ENCODE measurements at regions of chr2 and their contacts with region 1.

Region 1: GRCh38 chr2:174771631-174772471 is 7.6 kb upstream of the CHRNA1 start:
- DNase-seq: peak; percentile 85 to 93
- H3K4me3 ChIP-seq: no peak overlapping the region; a peak in 2 of 8 replicates
- H3K27ac ChIP-seq: peak overlapping the region; percentile 80
- H3K4me1 ChIP-seq: peaks cover 11 to 19% (median 12%) of the 10 kb centered on the region in 4 experiments
- H3K27me3 ChIP-seq: no peaks in the 10 kb centered on the region
- CTCF ChIP-seq: peak; percentile 79 to 94 (median 86)
- EP300 ChIP-seq: peak in 1 of 2 experiments; percentile 66; a peak in 1 of 3 replicates
- POLR2A ChIP-seq: peak in 1 of 2 experiments; percentile 52; a peak in 2 of 3 replicates
- RAD21 ChIP-seq: peak; percentile 91 to 95

Region 2: GRCh38 chr2:174644401-174644800 is 127.5 kb before region 1 on chr2:
- CTCF ChIA-PET with region 1: no interaction called
- POLR2A ChIA-PET with region 1: no interaction called
- DNase-seq: no peak
- H3K4me3 ChIP-seq: no peak overlapping the region
- H3K27ac ChIP-seq: no peak overlapping the region
- H3K4me1 ChIP-seq: no peaks in the 10 kb centered on the region
- H3K27me3 ChIP-seq: no peaks in the 10 kb centered on the region
- CTCF ChIP-seq: no peak
- EP300 ChIP-seq: no peak
- POLR2A ChIP-seq: no peak
- RAD21 ChIP-seq: no peak

Region 3: DNA sequence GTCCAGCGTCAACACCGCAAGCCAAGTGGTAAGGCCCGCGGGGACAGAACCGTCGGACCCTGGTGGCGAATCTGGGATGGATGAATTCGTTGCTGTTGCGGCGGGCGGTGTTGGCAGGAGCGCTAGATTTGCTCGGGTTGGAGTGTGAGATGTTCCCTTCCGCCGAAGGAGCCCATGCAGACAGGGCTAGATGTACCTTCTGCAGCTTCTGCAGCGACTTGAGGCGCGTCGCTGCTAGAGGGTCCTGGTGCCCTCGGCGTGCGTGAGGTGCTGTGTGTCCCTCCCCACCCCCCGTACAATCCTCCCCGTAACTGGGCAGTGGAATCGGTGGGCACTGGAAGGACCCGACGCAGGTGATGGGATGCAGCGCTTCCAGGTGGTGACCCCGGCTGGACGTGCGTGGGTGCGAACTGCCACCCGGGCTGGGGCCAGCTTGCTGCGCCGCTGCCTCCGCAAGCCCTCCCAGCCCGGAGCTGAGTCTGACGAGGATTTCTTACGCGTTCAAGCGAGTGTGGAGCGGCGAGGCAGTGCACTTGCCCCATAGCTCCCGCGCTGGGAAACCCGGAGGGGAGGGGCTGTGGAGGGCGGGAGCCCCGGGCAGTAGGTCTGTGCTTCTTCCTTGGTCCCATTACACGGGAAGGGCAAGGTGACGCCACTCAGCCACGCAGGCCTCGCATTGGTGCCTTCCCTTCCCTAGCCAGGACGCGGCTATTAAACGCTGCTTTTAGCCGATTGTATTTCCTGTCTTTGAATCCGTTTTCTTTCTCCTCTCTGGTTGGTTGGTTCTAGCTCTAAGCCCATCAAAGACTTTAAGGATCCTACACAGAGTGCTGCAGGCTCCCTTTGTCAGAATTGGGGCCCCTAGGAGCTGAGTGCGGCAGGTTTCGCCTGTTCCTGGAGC is 41.8 kb before region 1 on chr2:
- CTCF ChIA-PET with region 1: interaction called, 15 read pairs
- POLR2A ChIA-PET with region 1: interaction called, 4 read pairs
- DNase-seq: peak; percentile 29 to 59
- H3K4me3 ChIP-seq: peak overlapping the region; percentile 40 to 66 (median 50)
- H3K27ac ChIP-seq: no peak overlapping the region
- H3K4me1 ChIP-seq: peaks cover 0 to 1% (median 0%) of the 10 kb centered on the region in 4 experiments; a peak in 3 of 7 replicates
- H3K27me3 ChIP-seq: peaks cover 0 to 20% (median 9%) of the 10 kb centered on the region in 4 experiments; a peak in 5 of 7 replicates
- CTCF ChIP-seq: 0 out of 4 replicates have a peak, but pooled peaks of 1 of the 3 experiments have one; percentile 11
- EP300 ChIP-seq: no peak
- POLR2A ChIP-seq: no peak
- RAD21 ChIP-seq: no peak

Region 4: GRCh38 chr2:174787487-174788205 is 15.8 kb after region 1 on chr2:
- CTCF ChIA-PET with region 1: interaction called, 82 read pairs
- POLR2A ChIA-PET with region 1: interaction called, 50 read pairs
- DNase-seq: peak; percentile 70 to 91
- H3K4me3 ChIP-seq: peak overlapping the region in 1 of 4 experiments; percentile 18; a peak in 1 of 8 replicates
- H3K27ac ChIP-seq: peak overlapping the region; percentile 83
- H3K4me1 ChIP-seq: peaks cover 6 to 34% (median 12%) of the 10 kb centered on the region in 4 experiments
- H3K27me3 ChIP-seq: no peaks in the 10 kb centered on the region
- CTCF ChIP-seq: no peak
- EP300 ChIP-seq: no peak
- POLR2A ChIP-seq: 0 out of 3 replicates have a peak, but pooled peaks of 1 of the 2 experiments have one; percentile 17
- RAD21 ChIP-seq: no peak

Region 5: DNA sequence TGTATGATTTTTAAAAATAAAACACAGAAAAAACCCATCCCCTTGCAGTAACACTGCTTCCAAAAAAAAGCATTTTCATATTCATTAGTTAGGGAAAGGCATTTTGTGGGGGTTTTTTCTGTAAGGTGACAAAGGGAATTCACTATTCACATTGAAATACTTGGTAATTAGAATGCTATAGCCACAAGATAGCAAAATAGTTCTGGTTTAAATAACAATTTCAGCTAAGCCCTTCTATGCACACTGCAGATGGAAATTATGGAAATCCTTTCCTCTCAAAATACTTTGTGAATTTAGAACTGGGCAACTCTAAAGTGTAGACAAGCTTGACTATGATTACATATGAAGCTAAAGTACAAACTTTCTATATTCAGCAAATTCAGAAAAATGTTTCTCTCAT is 94.6 kb after region 1 on chr2:
- CTCF ChIA-PET with region 1: interaction called, 11 read pairs
- POLR2A ChIA-PET with region 1: interaction called, 4 read pairs
- DNase-seq: no peak
- H3K4me3 ChIP-seq: peak overlapping the region in 1 of 4 experiments; percentile 41; a peak in 1 of 8 replicates
- H3K27ac ChIP-seq: no peak overlapping the region
- H3K4me1 ChIP-seq: peaks cover 0 to 4% (median 3%) of the 10 kb centered on the region in 4 experiments; a peak in 2 of 7 replicates
- H3K27me3 ChIP-seq: no peaks in the 10 kb centered on the region
- CTCF ChIP-seq: no peak
- EP300 ChIP-seq: no peak
- POLR2A ChIP-seq: no peak
- RAD21 ChIP-seq: no peak

Region 6: DNA sequence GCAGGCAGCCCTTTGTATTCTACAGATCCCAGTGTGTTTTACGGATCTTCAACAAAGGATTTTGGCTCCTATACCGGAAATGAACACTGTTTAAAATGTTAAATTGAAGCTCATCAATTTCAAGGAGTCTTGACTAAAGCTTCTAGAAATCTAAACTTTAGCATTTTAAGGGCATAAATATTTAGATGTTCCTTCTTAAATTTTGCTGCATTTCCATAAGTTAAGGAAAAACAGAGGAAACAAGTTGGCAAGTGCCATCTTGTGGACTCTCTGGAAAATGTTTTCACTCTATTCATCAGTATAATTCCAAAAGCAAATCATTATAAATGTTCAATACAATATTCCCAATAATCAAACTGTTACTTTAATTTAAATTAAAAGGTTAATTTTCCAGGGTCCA is 213.8 kb after region 1 on chr2:
- CTCF ChIA-PET with region 1: interaction called, 249 read pairs
- POLR2A ChIA-PET with region 1: interaction called, 8 read pairs
- DNase-seq: no peak
- H3K4me3 ChIP-seq: no peak overlapping the region
- H3K27ac ChIP-seq: no peak overlapping the region
- H3K4me1 ChIP-seq: no peaks in the 10 kb centered on the region; a peak in 2 of 7 replicates
- H3K27me3 ChIP-seq: no peaks in the 10 kb centered on the region
- CTCF ChIP-seq: peak in 2 of 3 experiments; percentile 37 to 40; a peak in 2 of 4 replicates
- EP300 ChIP-seq: no peak
- POLR2A ChIP-seq: no peak
- RAD21 ChIP-seq: peak; percentile 54 to 68